ENCODE measurements at regions of chr10 and their contacts with region 1.

Region 1: GRCh38 chr10:59830601-59831259 is 75.6 kb downstream of the CCDC6 start:
- DNase-seq: peak; percentile 71
- H3K4me3 ChIP-seq: no peak overlapping the region
- H3K27ac ChIP-seq: no peak overlapping the region
- H3K4me1 ChIP-seq: no peaks in the 10 kb centered on the region
- H3K27me3 ChIP-seq: no peaks in the 10 kb centered on the region
- CTCF ChIP-seq: peak; percentile 80

Region 2: DNA sequence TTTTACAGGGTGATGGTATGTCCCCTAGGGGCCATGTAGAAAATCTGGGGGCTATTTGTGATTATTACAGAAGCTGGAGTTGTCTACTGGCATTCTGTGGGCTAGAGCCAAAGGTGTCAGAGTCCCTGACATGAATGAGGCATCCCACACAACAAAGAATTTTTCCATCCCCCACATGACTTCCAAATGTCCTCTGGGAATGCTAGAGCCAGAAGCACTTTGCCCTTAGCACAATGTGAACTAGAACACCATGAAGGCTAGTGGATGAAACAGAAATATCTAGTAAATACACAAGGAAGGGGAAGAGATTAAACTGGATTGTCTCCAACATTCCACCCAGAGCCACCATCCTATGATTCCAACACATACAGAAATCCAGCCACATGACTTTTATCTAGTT is 515.3 kb before region 1 on chr10:
- CTCF ChIA-PET with region 1: no interaction called
- POLR2A ChIA-PET with region 1: no interaction called
- intact Hi-C with region 1: no loop called
- DNase-seq: no peak
- H3K4me3 ChIP-seq: no peak overlapping the region
- H3K27ac ChIP-seq: no peak overlapping the region
- H3K4me1 ChIP-seq: peaks cover 23% of the 10 kb centered on the region
- H3K27me3 ChIP-seq: no peaks in the 10 kb centered on the region
- CTCF ChIP-seq: no peak

Region 3: GRCh38 chr10:59844436-59844835 is 13.7 kb after region 1 on chr10:
- CTCF ChIA-PET with region 1: no interaction called
- POLR2A ChIA-PET with region 1: no interaction called
- intact Hi-C with region 1: no loop called
- DNase-seq: no peak
- H3K4me3 ChIP-seq: no peak overlapping the region
- H3K27ac ChIP-seq: no peak overlapping the region
- H3K4me1 ChIP-seq: no peaks in the 10 kb centered on the region
- H3K27me3 ChIP-seq: no peaks in the 10 kb centered on the region
- CTCF ChIP-seq: no peak

Region 4: GRCh38 chr10:59857921-59858320 is 27.2 kb after region 1 on chr10:
- CTCF ChIA-PET with region 1: no interaction called
- POLR2A ChIA-PET with region 1: no interaction called
- intact Hi-C with region 1: no loop called
- DNase-seq: no peak
- H3K4me3 ChIP-seq: no peak overlapping the region
- H3K27ac ChIP-seq: no peak overlapping the region
- H3K4me1 ChIP-seq: peaks cover 14% of the 10 kb centered on the region
- H3K27me3 ChIP-seq: no peaks in the 10 kb centered on the region
- CTCF ChIP-seq: no peak

Region 5: GRCh38 chr10:60032723-60033122 is 202.0 kb after region 1 on chr10:
- CTCF ChIA-PET with region 1: no interaction called
- POLR2A ChIA-PET with region 1: no interaction called
- intact Hi-C with region 1: loop called (anchors 10 kb)
- DNase-seq: peak; percentile 73
- H3K4me3 ChIP-seq: no peak overlapping the region
- H3K27ac ChIP-seq: no peak overlapping the region
- H3K4me1 ChIP-seq: peaks cover 20% of the 10 kb centered on the region
- H3K27me3 ChIP-seq: peaks cover 49% of the 10 kb centered on the region
- CTCF ChIP-seq: peak; percentile 80